Activated T-helper 2 cell treated with anti-CD3 and anti-CD28 coated beads, Interferon-gamma antibody, Interleukin-2, Interleukin-4, amounts not matched to agents 10 μg/mL and 5 μg/mL and 100 μg/mL, durations not matched to agents 14 hours and 24 hours and 36 hours (primary cell): ENCODE measurements at regions of chr7 and their contacts with region 1.

Region 1: GRCh38 chr7:6589829-6590644 is at the start of gene INTS15:
- DNase-seq: peak; percentile 80
- H3K4me3 Mint-ChIP-seq: peak within 1 kb of the TSS; percentile 96
- H3K27ac Mint-ChIP-seq: peak within 1 kb of the TSS; percentile 90
- H3K4me1 Mint-ChIP-seq: peaks cover 12% of the 10 kb centered on the region
- H3K27me3 Mint-ChIP-seq: no peaks in the 10 kb centered on the region
- total RNA-seq, gene INTS15: 41.1 and 42.1 TPM in 2 replicates

Region 2: GRCh38 chr7:6637544-6638229 is 47.6 kb after region 1 on chr7:
- intact Hi-C with region 1: loop called (anchors 5 kb)
- DNase-seq: peak; percentile 32
- H3K4me3 Mint-ChIP-seq: peak overlapping the region; percentile 87
- H3K27ac Mint-ChIP-seq: peak overlapping the region; percentile 80
- H3K4me1 Mint-ChIP-seq: peaks cover 18% of the 10 kb centered on the region
- H3K27me3 Mint-ChIP-seq: no peaks in the 10 kb centered on the region